ENCODE measurements at regions of chr15 and their contacts with region 1.

Region 1: DNA sequence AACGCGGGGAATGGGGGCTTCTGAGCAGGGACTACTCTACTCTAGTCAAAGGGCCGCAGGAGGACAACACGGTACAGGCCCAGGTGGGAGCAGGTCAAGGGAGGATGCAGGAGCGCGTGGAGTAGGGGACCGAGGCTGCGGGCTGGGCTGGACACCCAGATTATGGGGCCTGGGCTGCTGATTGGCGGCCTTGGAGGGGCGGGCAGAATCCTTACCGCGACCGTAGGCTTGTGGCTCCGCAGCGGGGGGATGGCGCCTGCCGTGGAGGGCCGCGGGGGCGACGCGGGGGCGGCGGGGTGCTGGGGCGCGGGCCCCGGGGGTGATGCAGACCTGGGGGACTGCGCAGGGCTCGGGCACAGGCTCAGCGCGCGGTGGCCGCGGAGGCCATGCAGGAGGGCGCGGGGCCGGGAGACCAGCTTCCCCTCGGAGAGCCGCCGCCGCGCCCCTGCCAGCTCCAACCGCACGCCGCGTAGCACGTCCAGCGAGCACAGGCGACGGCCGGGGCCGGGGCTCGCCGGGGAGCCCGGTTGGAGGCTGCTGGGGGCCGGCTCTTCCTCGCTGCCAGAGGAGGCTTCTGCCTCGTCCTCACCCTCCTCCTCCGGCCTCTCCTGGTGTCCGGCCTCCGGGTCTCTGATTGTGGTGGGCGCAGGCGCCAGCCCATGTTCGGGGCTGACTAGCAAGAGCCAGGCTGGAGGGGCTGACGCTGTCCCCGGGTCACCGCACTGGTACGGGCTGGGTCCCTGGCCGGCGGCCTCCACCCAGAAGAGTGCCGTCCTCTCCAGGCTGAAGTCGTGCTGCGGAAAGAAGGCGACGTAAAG is 12.9 kb downstream of the UBAP1L start:
- DNase-seq: no peak
- H3K4me3 ChIP-seq: no peak overlapping the region
- H3K27ac ChIP-seq: no peak overlapping the region
- H3K4me1 ChIP-seq: peaks cover 0 to 11% (median 10%) of the 10 kb centered on the region in 4 donors
- H3K27me3 ChIP-seq: no peaks in the 10 kb centered on the region
- CTCF ChIP-seq: no peak
- EP300 ChIP-seq: no peak
- POLR2A ChIP-seq: no peak

Region 2: GRCh38 chr15:65048241-65048640 is 53.9 kb before region 1 on chr15:
- in situ Hi-C with region 1: no loop called
- intact Hi-C with region 1: loop called (anchors 1 kb)
- DNase-seq: no peak
- H3K4me3 ChIP-seq: no peak overlapping the region
- H3K27ac ChIP-seq: no peak overlapping the region
- H3K4me1 ChIP-seq: peaks cover 5 to 39% (median 35%) of the 10 kb centered on the region in 4 donors
- H3K27me3 ChIP-seq: no peaks in the 10 kb centered on the region
- CTCF ChIP-seq: no peak
- EP300 ChIP-seq: no peak
- POLR2A ChIP-seq: no peak

Region 3: GRCh38 chr15:65201905-65202304 is 99.8 kb after region 1 on chr15:
- in situ Hi-C with region 1: no loop called
- intact Hi-C with region 1: no loop called
- DNase-seq: no peak
- H3K4me3 ChIP-seq: no peak overlapping the region
- H3K27ac ChIP-seq: no peak overlapping the region
- H3K4me1 ChIP-seq: no peaks in the 10 kb centered on the region
- H3K27me3 ChIP-seq: no peaks in the 10 kb centered on the region
- CTCF ChIP-seq: no peak
- EP300 ChIP-seq: no peak
- POLR2A ChIP-seq: no peak

Region 4: GRCh38 chr15:65212097-65212496 is 110.0 kb after region 1 on chr15:
- in situ Hi-C with region 1: no loop called
- intact Hi-C with region 1: no loop called
- DNase-seq: no peak
- H3K4me3 ChIP-seq: no peak overlapping the region
- H3K27ac ChIP-seq: peak overlapping the region in 2 of 4 donors; percentile 38 to 63
- H3K4me1 ChIP-seq: peaks cover 0 to 16% (median 8%) of the 10 kb centered on the region in 4 donors
- H3K27me3 ChIP-seq: no peaks in the 10 kb centered on the region
- CTCF ChIP-seq: peak in 2 of 5 experiments; percentile 24 to 30
- EP300 ChIP-seq: no peak
- POLR2A ChIP-seq: no peak